ENCODE measurements at regions of chr19 and their contacts with region 1.

Region 1: DNA sequence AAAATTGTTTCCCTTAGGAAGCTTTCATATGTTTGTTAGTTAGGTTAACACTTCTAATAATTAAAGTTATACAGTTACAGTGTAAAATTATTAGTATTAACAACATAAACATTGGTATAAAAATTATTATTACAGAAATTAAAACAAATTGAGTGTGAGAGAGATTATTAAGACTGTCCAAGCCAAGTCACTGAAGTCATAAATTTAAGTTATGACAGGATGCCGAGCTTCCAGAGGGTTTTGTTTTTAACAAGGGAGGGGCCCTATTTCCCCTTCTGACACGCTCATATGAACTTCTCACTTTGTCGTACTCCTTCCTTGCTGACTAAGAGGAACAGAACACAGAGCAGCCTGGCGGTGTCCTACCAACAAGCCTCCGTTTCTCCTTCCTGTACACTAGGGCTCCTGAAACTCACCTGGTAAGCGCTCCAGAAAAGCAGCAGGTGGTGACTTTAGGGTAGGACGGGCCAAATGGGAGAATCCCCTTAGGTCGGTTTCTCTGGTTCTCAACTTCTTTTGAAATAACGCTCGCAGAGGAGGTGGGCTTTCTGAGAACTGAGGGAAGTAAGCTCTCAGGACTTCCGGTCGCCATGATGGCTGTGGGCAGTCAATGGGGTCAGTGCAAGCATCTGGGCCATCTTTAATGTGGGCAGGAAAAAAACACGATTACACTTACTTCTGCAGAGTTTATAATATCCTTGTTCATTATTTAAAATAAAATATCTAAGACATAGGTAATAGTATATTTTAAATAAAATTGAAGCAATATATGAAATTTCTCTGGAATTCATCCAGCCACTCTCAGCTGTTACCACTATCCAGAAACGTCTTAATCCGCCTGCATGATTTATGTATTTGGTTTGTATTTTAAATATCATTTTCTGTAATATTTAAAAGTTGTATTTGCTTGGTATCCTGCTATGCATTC is at the start of gene CARD8:
- DNase-seq: peak; percentile 53 to 70
- H3K4me3 ChIP-seq: peak within 1 kb of the TSS; percentile 66 to 83 (median 78)
- H3K27ac ChIP-seq: peak within 1 kb of the TSS; percentile 74
- H3K4me1 ChIP-seq: no peaks in the 10 kb centered on the region
- H3K27me3 ChIP-seq: no peaks in the 10 kb centered on the region
- CTCF ChIP-seq: no peak
- EP300 ChIP-seq: no peak
- POLR2A ChIP-seq: peak; percentile 62 to 87
- RAD21 ChIP-seq: no peak
- total RNA-seq, gene CARD8: 24.4 and 26.2 TPM in 2 replicates

Region 2: DNA sequence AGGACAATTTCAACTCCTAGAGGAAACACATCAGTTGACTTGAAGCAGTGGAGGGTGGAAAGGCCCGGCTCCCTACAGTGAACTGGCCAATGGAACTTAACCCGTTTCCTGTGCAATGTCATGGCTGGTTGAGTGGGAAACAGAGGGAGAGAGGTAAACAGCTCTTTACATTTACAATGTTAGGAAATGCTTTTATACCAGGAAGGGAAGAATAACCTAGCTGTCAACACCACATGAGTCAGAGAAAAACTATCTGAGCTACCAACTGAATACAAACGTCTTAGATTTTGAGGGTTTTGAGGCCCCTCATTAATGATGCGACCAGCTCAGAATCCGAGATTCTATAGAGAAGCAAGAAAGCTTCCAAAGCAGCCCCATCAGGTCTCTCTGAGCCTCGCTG is 36.6 kb before region 1 on chr19:
- CTCF ChIA-PET with region 1: interaction called, 52 read pairs
- POLR2A ChIA-PET with region 1: no interaction called
- DNase-seq: no peak
- H3K4me3 ChIP-seq: no peak overlapping the region
- H3K27ac ChIP-seq: no peak overlapping the region
- H3K4me1 ChIP-seq: no peaks in the 10 kb centered on the region; a peak in 1 of 7 replicates
- H3K27me3 ChIP-seq: no peaks in the 10 kb centered on the region
- CTCF ChIP-seq: no peak
- EP300 ChIP-seq: no peak
- POLR2A ChIP-seq: no peak
- RAD21 ChIP-seq: no peak

Region 3: GRCh38 chr19:48230555-48231129 is 25.0 kb before region 1 on chr19:
- CTCF ChIA-PET with region 1: no interaction called
- POLR2A ChIA-PET with region 1: no interaction called
- DNase-seq: no peak
- H3K4me3 ChIP-seq: no peak overlapping the region
- H3K27ac ChIP-seq: no peak overlapping the region
- H3K4me1 ChIP-seq: no peaks in the 10 kb centered on the region
- H3K27me3 ChIP-seq: no peaks in the 10 kb centered on the region
- CTCF ChIP-seq: no peak
- EP300 ChIP-seq: no peak
- POLR2A ChIP-seq: no peak
- RAD21 ChIP-seq: no peak

Region 4: GRCh38 chr19:48319188-48320027 is 63.8 kb after region 1 on chr19:
- CTCF ChIA-PET with region 1: no interaction called
- POLR2A ChIA-PET with region 1: no interaction called
- DNase-seq: no peak
- H3K4me3 ChIP-seq: no peak overlapping the region
- H3K27ac ChIP-seq: no peak overlapping the region
- H3K4me1 ChIP-seq: peaks cover 0 to 17% (median 8%) of the 10 kb centered on the region in 4 experiments; a peak in 5 of 7 replicates
- H3K27me3 ChIP-seq: peaks cover 0 to 4% (median 2%) of the 10 kb centered on the region in 4 experiments; a peak in 1 of 7 replicates
- CTCF ChIP-seq: no peak
- EP300 ChIP-seq: no peak
- POLR2A ChIP-seq: no peak
- RAD21 ChIP-seq: no peak